A549 (cell line): ENCODE measurements at regions of chr15 and their contacts with region 1.

Region 1: GRCh38 chr15:78131295-78132061 is at the start of gene CIB2:
- DNase-seq: peak; percentile 71 to 92
- ATAC-seq: peak; percentile 84 to 87
- H3K4me3 ChIP-seq: peak within 1 kb of the TSS; percentile 86
- H3K27ac ChIP-seq: peak within 1 kb of the TSS; percentile 91 to 94
- H3K4me1 ChIP-seq: peaks cover 38% of the 10 kb centered on the region
- CTCF ChIP-seq: peak; percentile 85
- EP300 ChIP-seq: no peak
- POLR2A ChIP-seq: peak; percentile 74
- RAD21 ChIP-seq: peak; percentile 61 to 81
- polyA plus RNA-seq, gene CIB2: 16.4 and 21.2 TPM in 2 replicates

Region 2: GRCh38 chr15:77722759-77723460 is 408.6 kb before region 1 on chr15:
- CTCF ChIA-PET with region 1: no interaction called
- POLR2A ChIA-PET with region 1: no interaction called
- DNase-seq: no peak
- ATAC-seq: peak in 1 of 2 experiments; percentile 36; a peak in 3 of 6 replicates
- H3K4me3 ChIP-seq: no peak overlapping the region
- H3K27ac ChIP-seq: no peak overlapping the region
- H3K4me1 ChIP-seq: no peaks in the 10 kb centered on the region
- CTCF ChIP-seq: no peak
- EP300 ChIP-seq: no peak
- POLR2A ChIP-seq: no peak
- RAD21 ChIP-seq: no peak

Region 3: GRCh38 chr15:78120523-78120922 is 11.0 kb before region 1 on chr15:
- CTCF ChIA-PET with region 1: interaction called, 27 read pairs
- POLR2A ChIA-PET with region 1: no interaction called
- DNase-seq: no peak
- ATAC-seq: no peak
- H3K4me3 ChIP-seq: no peak overlapping the region
- H3K27ac ChIP-seq: no peak overlapping the region
- H3K4me1 ChIP-seq: no peaks in the 10 kb centered on the region
- CTCF ChIP-seq: no peak
- EP300 ChIP-seq: no peak
- POLR2A ChIP-seq: no peak
- RAD21 ChIP-seq: no peak

Region 4: GRCh38 chr15:78149068-78149804 is 17.8 kb after region 1 on chr15 and contains the start of gene IDH3A:
- CTCF ChIA-PET with region 1: interaction called, 54 read pairs
- POLR2A ChIA-PET with region 1: interaction called, 16 read pairs
- DNase-seq: peak; percentile 97
- ATAC-seq: peak; percentile 93 to 95
- H3K4me3 ChIP-seq: peak within 1 kb of the TSS; percentile 74
- H3K27ac ChIP-seq: peak within 1 kb of the TSS; percentile 80 to 92
- H3K4me1 ChIP-seq: peaks cover 16% of the 10 kb centered on the region
- CTCF ChIP-seq: no peak
- EP300 ChIP-seq: no peak
- POLR2A ChIP-seq: peak; percentile 97
- RAD21 ChIP-seq: no peak
- polyA plus RNA-seq, gene IDH3A: 148 and 149 TPM in 2 replicates

Region 5: GRCh38 chr15:78170848-78171773 is 39.6 kb after region 1 on chr15:
- CTCF ChIA-PET with region 1: interaction called, 14 read pairs
- POLR2A ChIA-PET with region 1: no interaction called
- DNase-seq: no peak
- ATAC-seq: no peak
- H3K4me3 ChIP-seq: no peak overlapping the region
- H3K27ac ChIP-seq: no peak overlapping the region
- H3K4me1 ChIP-seq: no peaks in the 10 kb centered on the region
- CTCF ChIP-seq: no peak
- EP300 ChIP-seq: no peak
- POLR2A ChIP-seq: no peak
- RAD21 ChIP-seq: no peak

Region 6: GRCh38 chr15:78234515-78235040 is 103.1 kb after region 1 on chr15 and contains the start of gene ACSBG1:
- CTCF ChIA-PET with region 1: interaction called, 116 read pairs
- POLR2A ChIA-PET with region 1: no interaction called
- DNase-seq: no peak
- ATAC-seq: no peak
- H3K4me3 ChIP-seq: no peak within 1 kb of the TSS
- H3K27ac ChIP-seq: no peak within 1 kb of the TSS
- H3K4me1 ChIP-seq: no peaks in the 10 kb centered on the region
- CTCF ChIP-seq: no peak
- EP300 ChIP-seq: no peak
- POLR2A ChIP-seq: no peak
- RAD21 ChIP-seq: no peak
- polyA plus RNA-seq, gene ACSBG1: 0.16 and 0.21 TPM in 2 replicates